ENCODE measurements at regions of chr13 and their contacts with region 1.

Region 1: GRCh38 chr13:84973661-84974060 is 825.6 kb downstream of the SLITRK6 start:
- DNase-seq: no peak
- H3K4me3 ChIP-seq: no peak overlapping the region
- CTCF ChIP-seq: no peak
- POLR2A ChIP-seq: no peak

Region 2: GRCh38 chr13:84784443-84785153 is 189.1 kb before region 1 on chr13:
- intact Hi-C with region 1: no loop called
- DNase-seq: no peak
- H3K4me3 ChIP-seq: no peak overlapping the region
- CTCF ChIP-seq: no peak
- POLR2A ChIP-seq: no peak

Region 3: DNA sequence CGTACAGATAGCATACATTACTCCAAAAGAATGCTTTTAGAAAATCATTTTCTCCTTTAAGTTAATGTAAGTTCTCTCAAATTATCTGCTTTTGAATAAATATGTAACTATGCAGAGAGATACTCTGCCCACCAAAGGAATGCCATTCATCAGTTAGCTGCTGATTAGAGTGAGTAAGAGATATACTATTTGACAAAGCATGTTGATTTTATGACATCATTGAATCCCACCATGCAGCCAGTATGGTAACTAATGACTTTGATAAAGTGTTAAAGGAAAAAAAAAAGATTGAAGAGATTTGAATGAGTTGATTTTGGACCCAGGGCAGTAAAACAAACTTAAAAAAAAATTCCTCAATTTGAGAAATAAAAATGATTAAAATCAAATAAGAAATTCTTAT is 304.1 kb after region 1 on chr13:
- intact Hi-C with region 1: loop called (anchors 10 kb)
- DNase-seq: no peak
- H3K4me3 ChIP-seq: no peak overlapping the region
- CTCF ChIP-seq: no peak
- POLR2A ChIP-seq: no peak

Region 4: DNA sequence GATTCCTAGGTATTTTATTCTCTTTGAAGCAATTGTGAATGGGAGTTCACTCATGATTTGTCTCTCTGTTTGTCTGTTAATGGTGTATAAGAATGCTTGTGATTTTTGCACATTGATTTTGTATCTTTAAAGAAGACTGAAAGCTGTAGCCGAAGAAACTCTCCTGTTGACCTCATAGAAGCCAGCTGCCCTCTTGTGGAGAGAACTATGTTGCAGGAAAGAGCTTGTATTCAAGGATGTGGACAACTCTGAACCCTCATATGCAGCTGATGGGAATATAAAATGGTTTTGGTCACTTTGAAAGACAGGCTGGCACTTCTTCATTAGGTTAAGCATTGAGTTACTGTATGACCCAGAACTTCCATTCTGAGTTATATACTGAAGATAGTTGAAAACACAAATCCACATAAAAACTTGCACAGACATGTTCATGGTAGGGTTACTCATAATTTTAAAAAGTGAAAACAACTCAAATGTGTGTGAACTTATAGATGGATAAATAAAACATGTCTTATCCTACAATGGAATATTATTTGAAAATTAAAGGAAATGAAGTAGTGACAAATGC is 891.4 kb after region 1 on chr13:
- intact Hi-C with region 1: no loop called
- DNase-seq: no peak
- H3K4me3 ChIP-seq: no peak overlapping the region
- CTCF ChIP-seq: no peak
- POLR2A ChIP-seq: no peak